ENCODE measurements at regions of chr3 and their contacts with region 1.

Region 1: DNA sequence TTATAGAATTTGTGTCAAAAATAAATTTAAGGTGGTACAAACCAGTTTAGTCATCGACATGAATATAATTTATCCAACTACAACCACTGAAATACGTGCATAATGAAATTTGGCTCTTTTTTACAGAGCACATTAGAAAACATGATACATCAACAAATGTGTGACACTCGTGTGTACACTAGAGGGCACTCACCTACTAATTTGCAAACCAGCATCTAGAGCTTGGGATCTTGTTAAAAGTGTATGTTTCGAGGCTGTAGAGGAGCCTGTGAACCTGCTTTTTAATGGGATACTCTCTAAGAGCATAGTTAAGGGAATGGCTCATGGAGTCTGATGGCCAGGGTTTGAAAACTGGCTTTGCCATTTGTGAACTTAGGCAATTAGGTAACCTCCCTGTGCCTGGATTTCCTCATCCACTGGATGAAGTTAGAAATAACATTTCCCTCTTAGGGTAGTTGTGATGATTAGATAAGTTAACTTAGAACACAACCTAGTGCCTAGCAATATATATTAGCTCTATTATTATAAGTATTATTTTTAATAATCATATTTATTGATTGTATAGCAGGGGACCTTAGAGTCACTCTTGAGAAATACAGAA is 8.8 kb upstream of the CPOX start:
- DNase-seq: peak; percentile 28
- ATAC-seq: peak; percentile 74 to 85

Region 2: GRCh38 chr3:98497381-98497780 is 104.8 kb before region 1 on chr3 and contains the start of gene OR5K2:
- intact Hi-C with region 1: no loop called
- DNase-seq: no peak
- ATAC-seq: no peak
- total RNA-seq, gene OR5K2: not detected

Region 3: DNA sequence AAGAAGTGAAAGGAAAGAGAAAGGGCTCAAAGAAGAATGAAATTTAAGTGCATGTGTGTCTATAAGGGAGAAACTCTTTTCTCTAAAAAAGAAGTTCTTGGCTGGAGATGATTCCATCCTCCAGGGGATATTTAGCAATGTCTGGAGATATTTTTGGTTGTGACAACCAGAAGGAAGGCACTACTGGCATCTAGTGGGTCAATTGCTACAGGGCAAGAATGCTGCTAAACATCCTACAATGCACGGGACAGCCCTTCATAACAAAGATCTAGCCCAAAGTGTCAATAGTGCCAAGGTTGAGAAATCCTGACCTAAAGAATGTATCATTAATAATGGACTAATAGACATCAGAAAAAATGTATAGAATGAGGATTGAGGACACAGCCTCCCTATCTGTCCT is 103.5 kb after region 1 on chr3:
- intact Hi-C with region 1: loop called in 1 of 2 experiments (anchors 10 kb)
- DNase-seq: no peak
- ATAC-seq: peak in 1 of 2 donors; percentile 70

Region 4: DNA sequence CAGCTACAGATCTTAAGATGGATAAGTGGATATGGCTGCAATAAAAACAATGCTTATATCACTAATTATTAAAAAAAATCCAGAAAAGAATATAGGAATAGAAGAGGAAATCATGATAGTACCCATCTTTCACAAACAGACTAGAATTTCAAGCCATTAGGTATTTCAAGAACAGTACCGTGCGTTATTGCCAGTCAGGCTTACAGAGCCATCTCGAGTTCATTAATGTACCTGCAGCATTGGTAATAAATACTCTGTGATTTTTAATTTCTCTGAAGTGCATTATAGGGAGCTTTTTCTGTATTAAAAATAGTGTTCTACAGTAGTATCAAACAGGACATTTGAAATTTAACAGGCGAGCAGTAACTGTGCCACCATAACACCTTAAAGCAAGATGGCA is 196.6 kb after region 1 on chr3:
- intact Hi-C with region 1: loop called in 1 of 2 experiments (anchors 5 kb)
- DNase-seq: no peak
- ATAC-seq: peak in 1 of 2 donors; percentile 41

Region 5: GRCh38 chr3:98817547-98818041 is 215.4 kb after region 1 on chr3:
- intact Hi-C with region 1: loop called (anchors 2 to 5 kb)
- DNase-seq: no peak
- ATAC-seq: peak; percentile 74 to 83

Region 6: GRCh38 chr3:98994128-98994762 is 392.1 kb after region 1 on chr3:
- intact Hi-C with region 1: loop called (anchors 5 to 10 kb)
- DNase-seq: no peak
- ATAC-seq: peak; percentile 27 to 63